IMR-90 (cell line): ENCODE measurements at regions of chr1 and their contacts with region 1.

Region 1: GRCh38 chr1:162984699-162985098 is 84.5 kb upstream of the RGS4 start:
- DNase-seq: peak; percentile 94
- ATAC-seq: peak; percentile 64
- H3K4me3 ChIP-seq: no peak overlapping the region
- H3K27ac ChIP-seq: no peak overlapping the region
- H3K4me1 ChIP-seq: no peaks in the 10 kb centered on the region; the same call in 1 of the 2 replicates
- H3K27me3 ChIP-seq: no peaks in the 10 kb centered on the region
- CTCF ChIP-seq: no peak
- POLR2A ChIP-seq: peak; percentile 51; the same call in 1 of the 2 replicates
- RAD21 ChIP-seq: peak; percentile 21; the same call in 1 of the 2 replicates

Region 2: DNA sequence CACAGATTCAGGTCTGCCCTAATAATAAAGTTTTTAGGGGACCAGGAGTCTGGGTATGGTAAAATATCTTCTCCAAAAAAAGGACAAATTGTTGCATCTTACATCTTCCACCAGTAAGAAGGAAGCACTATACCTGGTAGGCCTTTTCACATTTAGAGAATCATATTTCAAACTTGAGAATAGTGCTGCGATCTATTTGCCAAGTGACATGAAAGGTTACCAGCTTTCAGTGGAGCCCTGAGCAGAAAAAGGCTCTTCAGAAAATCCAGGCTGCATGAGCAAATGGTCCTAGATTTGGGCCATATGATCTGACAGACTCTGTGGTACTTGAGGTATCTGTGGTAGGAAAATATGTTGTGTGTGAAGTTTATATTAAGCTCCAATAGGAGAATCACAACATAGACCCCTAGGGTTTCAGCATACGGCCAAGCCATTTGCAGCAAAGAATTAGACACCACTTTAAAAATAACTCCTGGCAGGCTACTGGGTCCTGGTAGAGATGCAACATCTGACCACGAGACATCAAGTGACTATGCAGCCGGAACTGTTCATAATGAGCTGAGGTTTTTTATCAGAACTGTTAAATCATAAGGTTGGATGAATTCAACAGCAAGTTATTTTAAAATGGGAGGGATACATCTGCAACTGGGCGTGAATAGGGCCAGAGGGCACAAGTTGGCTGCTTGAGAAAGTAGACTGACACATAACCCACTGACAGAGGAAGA is 85.1 kb before region 1 on chr1:
- CTCF ChIA-PET with region 1: no interaction called
- POLR2A ChIA-PET with region 1: no interaction called
- dilution Hi-C with region 1: no loop called
- in situ Hi-C with region 1: no loop called
- intact Hi-C with region 1: no loop called
- DNase-seq: peak; percentile 94
- ATAC-seq: peak; percentile 71
- H3K4me3 ChIP-seq: no peak overlapping the region
- H3K27ac ChIP-seq: no peak overlapping the region
- H3K4me1 ChIP-seq: peaks cover 7% of the 10 kb centered on the region
- H3K27me3 ChIP-seq: no peaks in the 10 kb centered on the region
- CTCF ChIP-seq: no peak
- POLR2A ChIP-seq: no peak
- RAD21 ChIP-seq: peak; percentile 20; the same call in 1 of the 2 replicates

Region 3: GRCh38 chr1:163144418-163144817 is 159.7 kb after region 1 on chr1:
- CTCF ChIA-PET with region 1: no interaction called
- POLR2A ChIA-PET with region 1: interaction called, 12 read pairs
- dilution Hi-C with region 1: no loop called
- in situ Hi-C with region 1: no loop called
- intact Hi-C with region 1: no loop called
- DNase-seq: no peak
- ATAC-seq: no peak
- H3K4me3 ChIP-seq: no peak overlapping the region
- H3K27ac ChIP-seq: no peak overlapping the region
- H3K4me1 ChIP-seq: no peaks in the 10 kb centered on the region
- H3K27me3 ChIP-seq: no peaks in the 10 kb centered on the region
- CTCF ChIP-seq: no peak
- POLR2A ChIP-seq: no peak
- RAD21 ChIP-seq: no peak